Aorta (tissue), 5 donors: ENCODE measurements at regions of chr10 and their contacts with region 1.

Region 1: GRCh38 chr10:67697724-67698131 is 1.7 kb upstream of the CTNNA3 start:
- DNase-seq: no peak
- ATAC-seq: peak; percentile 74
- H3K4me3 ChIP-seq: no peak overlapping the region
- H3K27ac ChIP-seq: no peak overlapping the region
- H3K4me1 ChIP-seq: peaks cover 0 to 2% of the 10 kb centered on the region in 2 donors
- H3K27me3 ChIP-seq: no peaks in the 10 kb centered on the region

Region 2: GRCh38 chr10:67764012-67764822 is 66.5 kb after region 1 on chr10:
- intact Hi-C with region 1: loop called in 1 of 2 experiments (anchors 5 kb)
- DNase-seq: peak; percentile 94 to 96
- ATAC-seq: peak; percentile 99
- H3K4me3 ChIP-seq: peak overlapping the region; percentile 91 to 94
- H3K27ac ChIP-seq: peak overlapping the region; percentile 72 to 86
- H3K4me1 ChIP-seq: no peaks in the 10 kb centered on the region
- H3K27me3 ChIP-seq: no peaks in the 10 kb centered on the region

Region 3: GRCh38 chr10:67779465-67780203 is 81.9 kb after region 1 on chr10:
- intact Hi-C with region 1: loop called (anchors 5 kb)
- DNase-seq: peak in 1 of 2 donors; percentile 63
- ATAC-seq: peak; percentile 91
- H3K4me3 ChIP-seq: peak overlapping the region in 1 of 2 donors; percentile 34
- H3K27ac ChIP-seq: no peak overlapping the region
- H3K4me1 ChIP-seq: no peaks in the 10 kb centered on the region
- H3K27me3 ChIP-seq: no peaks in the 10 kb centered on the region